Activated CD4-positive, alpha-beta T cell treated with anti-CD3 and anti-CD28 coated beads, Interleukin-2, amount 10 ng/mL, durations not matched to agents 24 days and 14 days (primary cell): ENCODE measurements at regions of chr3 and their contacts with region 1.

Region 1: DNA sequence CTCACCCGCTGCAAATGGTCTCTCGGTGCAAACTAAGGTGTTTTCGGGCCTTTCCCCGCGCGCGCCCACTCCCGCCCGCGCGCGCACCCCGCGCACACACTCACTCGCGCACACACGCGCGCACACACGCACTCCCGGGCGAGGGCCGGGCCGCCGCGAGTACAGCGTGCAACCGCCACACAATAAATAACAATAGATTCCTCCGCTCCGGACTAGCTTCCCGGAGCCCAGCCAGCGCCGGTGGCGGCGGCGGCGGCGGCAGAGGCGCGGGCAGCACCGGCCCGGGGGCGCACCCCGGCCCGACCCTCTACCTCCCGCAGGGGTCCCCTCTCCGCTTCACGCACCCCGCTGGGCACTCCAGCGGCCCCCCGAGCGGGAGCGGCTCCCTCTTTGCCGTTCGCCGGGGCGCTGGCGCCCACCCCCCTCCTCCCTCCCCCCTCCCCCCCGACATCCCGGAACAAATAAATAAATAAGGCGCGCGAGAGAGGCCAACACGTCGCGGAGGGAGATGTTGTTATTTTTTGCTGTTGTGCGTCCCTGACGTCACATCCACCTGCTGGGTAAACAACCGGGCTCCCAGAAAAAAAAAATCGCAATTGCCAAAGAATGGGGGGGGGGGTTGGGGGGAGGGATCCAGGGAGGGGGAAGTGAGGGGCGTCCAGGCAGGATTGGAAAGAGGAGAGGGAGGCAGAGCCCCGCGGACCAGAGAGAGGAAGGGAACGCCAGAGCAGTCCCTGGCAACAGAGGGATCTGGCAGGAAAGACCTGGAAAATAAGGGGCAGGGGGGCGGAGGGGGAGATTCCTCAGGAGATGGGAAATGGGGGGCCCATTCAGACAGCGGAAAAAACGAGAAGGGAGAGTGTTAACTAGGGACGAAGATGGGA is at the start of gene FOXP1:
- DNase-seq: peak; percentile 87
- H3K4me3 Mint-ChIP-seq: peak within 1 kb of the TSS; percentile 89
- H3K27ac Mint-ChIP-seq: peak within 1 kb of the TSS; percentile 95
- H3K4me1 Mint-ChIP-seq: peaks cover 38% of the 10 kb centered on the region
- H3K27me3 Mint-ChIP-seq: peaks cover 17% of the 10 kb centered on the region
- total RNA-seq, gene FOXP1: 102 and 110 TPM in 2 replicates

Region 2: GRCh38 chr3:70531063-70531657 is 1052.6 kb before region 1 on chr3:
- intact Hi-C with region 1: loop called (anchors 2 kb)
- DNase-seq: no peak
- H3K4me3 Mint-ChIP-seq: no peak overlapping the region
- H3K27ac Mint-ChIP-seq: no peak overlapping the region
- H3K4me1 Mint-ChIP-seq: no peaks in the 10 kb centered on the region
- H3K27me3 Mint-ChIP-seq: peaks cover 9% of the 10 kb centered on the region

Region 3: DNA sequence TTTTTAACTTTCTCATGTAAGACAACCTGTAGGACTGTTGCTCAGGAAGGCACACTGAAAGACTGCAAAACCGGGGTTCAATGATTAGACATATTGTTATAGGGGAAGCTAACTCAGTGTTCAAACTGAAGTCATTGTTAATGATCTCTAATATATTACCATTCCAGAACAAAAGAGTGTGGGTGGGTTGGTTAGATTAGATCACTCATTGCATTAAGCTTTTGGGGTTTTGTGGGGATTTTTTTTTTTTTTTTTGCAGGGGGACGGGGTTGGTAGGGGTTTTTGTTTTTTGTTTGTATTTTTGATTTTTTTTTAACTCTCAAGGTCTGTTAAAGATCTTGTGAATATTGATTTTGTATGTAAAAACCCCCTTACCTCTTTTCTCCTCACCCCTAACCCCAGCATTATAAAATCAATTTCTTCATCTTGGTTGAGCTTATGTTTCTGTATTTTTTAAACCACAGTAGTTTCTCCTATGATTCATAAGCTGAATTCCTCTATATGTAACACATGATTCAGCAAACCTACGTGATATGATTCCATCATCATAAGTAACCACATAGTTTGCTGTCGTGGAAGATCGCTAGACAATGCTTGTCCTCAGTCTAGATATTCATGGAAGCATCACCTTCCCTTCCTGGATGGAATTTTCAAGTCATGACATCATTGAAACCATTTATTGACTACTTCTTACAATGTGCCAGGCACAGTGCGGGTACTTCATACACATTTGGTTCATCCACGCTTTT is 727.2 kb before region 1 on chr3:
- intact Hi-C with region 1: loop called (anchors 1 kb)
- DNase-seq: no peak
- H3K4me3 Mint-ChIP-seq: no peak overlapping the region
- H3K27ac Mint-ChIP-seq: peak overlapping the region; percentile 54
- H3K4me1 Mint-ChIP-seq: peaks cover 12% of the 10 kb centered on the region
- H3K27me3 Mint-ChIP-seq: peaks cover 19% of the 10 kb centered on the region

Region 4: GRCh38 chr3:71087143-71088018 is 496.4 kb before region 1 on chr3:
- intact Hi-C with region 1: loop called (anchors 1 kb)
- DNase-seq: peak; percentile 83
- H3K4me3 Mint-ChIP-seq: peak overlapping the region; percentile 62
- H3K27ac Mint-ChIP-seq: peak overlapping the region; percentile 91
- H3K4me1 Mint-ChIP-seq: peaks cover 70% of the 10 kb centered on the region
- H3K27me3 Mint-ChIP-seq: no peaks in the 10 kb centered on the region

Region 5: DNA sequence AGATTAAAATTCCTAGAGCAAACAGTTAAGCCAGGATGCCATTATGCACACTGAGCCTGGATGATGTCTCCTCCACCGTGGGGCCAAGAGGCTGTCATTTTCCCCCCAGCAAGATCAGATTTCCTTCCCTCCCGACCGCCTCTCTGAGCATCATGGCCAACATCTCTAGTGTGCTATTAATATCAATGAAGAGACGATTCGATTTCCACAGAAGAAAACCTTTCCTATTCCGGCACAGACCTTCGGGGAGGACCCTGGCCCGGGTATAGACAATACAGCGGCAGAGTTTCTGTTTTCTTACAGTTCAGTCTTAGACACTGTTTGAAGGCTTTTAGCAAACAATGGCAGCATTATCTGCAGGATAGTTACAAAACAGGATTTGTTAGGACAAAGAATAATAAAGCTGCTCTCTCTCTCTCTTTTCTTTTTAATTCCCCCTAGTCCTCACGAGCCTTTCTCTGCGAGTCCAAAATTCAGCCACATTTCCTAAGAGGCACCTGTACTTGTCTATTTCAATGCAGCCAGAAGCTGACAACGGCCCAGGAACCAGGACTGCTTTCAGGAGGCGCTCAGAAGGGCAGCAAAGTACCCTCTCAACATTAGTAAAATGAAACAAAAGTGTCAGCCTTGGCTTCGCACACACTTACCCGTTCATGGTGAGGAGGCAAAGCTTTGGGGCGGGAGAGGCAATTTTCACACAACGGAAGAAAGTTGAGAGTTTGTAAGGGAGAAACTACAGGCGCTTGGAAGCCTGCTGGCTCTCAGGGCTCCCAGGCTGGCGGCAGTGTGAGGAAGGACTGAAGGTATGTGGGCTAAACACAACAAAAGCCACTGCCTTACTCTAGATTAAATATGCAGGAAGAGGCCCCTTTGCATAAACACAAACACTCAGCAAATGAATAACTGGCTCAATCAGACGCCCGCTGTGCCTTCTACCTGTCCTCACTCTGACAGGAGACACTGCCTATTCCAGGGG is 278.3 kb before region 1 on chr3:
- intact Hi-C with region 1: loop called (anchors 1 kb)
- DNase-seq: peak; percentile 68
- H3K4me3 Mint-ChIP-seq: peak overlapping the region; percentile 84
- H3K27ac Mint-ChIP-seq: peak overlapping the region; percentile 78
- H3K4me1 Mint-ChIP-seq: peaks cover 62% of the 10 kb centered on the region
- H3K27me3 Mint-ChIP-seq: peaks cover 30% of the 10 kb centered on the region

Region 6: GRCh38 chr3:71322154-71322553 is 261.7 kb before region 1 on chr3:
- intact Hi-C with region 1: no loop called
- DNase-seq: no peak
- H3K4me3 Mint-ChIP-seq: no peak overlapping the region
- H3K27ac Mint-ChIP-seq: no peak overlapping the region
- H3K4me1 Mint-ChIP-seq: no peaks in the 10 kb centered on the region
- H3K27me3 Mint-ChIP-seq: no peaks in the 10 kb centered on the region

Region 7: DNA sequence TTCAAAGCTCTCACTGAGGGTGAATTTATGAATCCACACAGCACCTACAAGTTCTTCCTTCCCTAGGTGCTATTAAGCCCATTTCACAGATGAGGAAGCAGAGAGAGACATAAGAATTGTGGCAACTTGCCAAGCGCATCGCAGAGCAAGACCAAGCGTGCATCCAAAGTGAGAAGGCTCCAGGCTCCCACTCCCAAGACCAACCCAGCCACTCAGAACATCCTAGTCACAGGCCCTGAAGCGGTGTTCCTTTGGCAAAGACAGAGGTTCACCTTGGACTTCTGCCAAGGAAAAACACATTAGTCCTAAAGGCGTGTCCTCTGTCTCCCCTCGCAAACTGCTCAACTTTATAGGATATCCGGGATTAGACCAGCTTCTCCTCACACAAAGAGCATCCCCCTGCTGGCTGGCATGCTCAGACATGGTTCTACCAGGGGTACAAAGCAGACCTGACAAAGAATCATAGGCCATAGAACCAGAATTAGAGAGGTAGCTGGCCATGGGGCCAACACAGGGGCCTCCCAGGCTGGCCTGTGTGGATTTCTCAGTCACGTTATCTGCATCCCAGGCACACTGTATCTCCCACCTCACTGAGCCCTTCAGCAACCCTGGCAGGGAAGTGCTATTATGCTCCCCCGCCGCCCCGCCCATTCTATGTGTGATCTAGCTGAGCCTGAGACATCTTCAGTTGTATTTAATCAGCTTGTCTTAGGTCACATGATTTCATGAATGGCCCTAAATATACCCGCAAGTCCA is 160.5 kb before region 1 on chr3:
- intact Hi-C with region 1: loop called (anchors 1 kb)
- DNase-seq: no peak
- H3K4me3 Mint-ChIP-seq: no peak overlapping the region
- H3K27ac Mint-ChIP-seq: no peak overlapping the region
- H3K4me1 Mint-ChIP-seq: peaks cover 38% of the 10 kb centered on the region
- H3K27me3 Mint-ChIP-seq: peaks cover 34% of the 10 kb centered on the region

Region 8: GRCh38 chr3:71466483-71466882 is 117.3 kb before region 1 on chr3:
- intact Hi-C with region 1: no loop called
- DNase-seq: no peak
- H3K4me3 Mint-ChIP-seq: no peak overlapping the region
- H3K27ac Mint-ChIP-seq: no peak overlapping the region
- H3K4me1 Mint-ChIP-seq: peaks cover 9% of the 10 kb centered on the region
- H3K27me3 Mint-ChIP-seq: no peaks in the 10 kb centered on the region

Region 9: GRCh38 chr3:71495708-71496472 is 87.9 kb before region 1 on chr3:
- intact Hi-C with region 1: loop called (anchors 5 kb)
- DNase-seq: peak; percentile 77
- H3K4me3 Mint-ChIP-seq: peak overlapping the region; percentile 71
- H3K27ac Mint-ChIP-seq: peak overlapping the region; percentile 81
- H3K4me1 Mint-ChIP-seq: peaks cover 50% of the 10 kb centered on the region
- H3K27me3 Mint-ChIP-seq: peaks cover 4% of the 10 kb centered on the region

Region 10: GRCh38 chr3:71532644-71533397 is 51.0 kb before region 1 on chr3:
- intact Hi-C with region 1: no loop called
- DNase-seq: no peak
- H3K4me3 Mint-ChIP-seq: no peak overlapping the region
- H3K27ac Mint-ChIP-seq: no peak overlapping the region
- H3K4me1 Mint-ChIP-seq: peaks cover 18% of the 10 kb centered on the region
- H3K27me3 Mint-ChIP-seq: peaks cover 5% of the 10 kb centered on the region

Region 11: GRCh38 chr3:71784914-71785531 is 201.2 kb after region 1 on chr3 and contains the start of gene PROK2:
- intact Hi-C with region 1: no loop called
- DNase-seq: peak; percentile 71
- H3K4me3 Mint-ChIP-seq: peak within 1 kb of the TSS; percentile 80
- H3K27ac Mint-ChIP-seq: peak within 1 kb of the TSS; percentile 28
- H3K4me1 Mint-ChIP-seq: peaks cover 20% of the 10 kb centered on the region
- H3K27me3 Mint-ChIP-seq: peaks cover 63% of the 10 kb centered on the region
- total RNA-seq, gene PROK2: not detected in 2 replicates